Activated CD4-positive, alpha-beta memory T cell treated with anti-CD3 and anti-CD28 coated beads, Interleukin-2, amount 10 ng/mL, durations not matched to agents 7 days and 5 days (primary cell): ENCODE measurements at regions of chr10 and their contacts with region 1.

Region 1: DNA sequence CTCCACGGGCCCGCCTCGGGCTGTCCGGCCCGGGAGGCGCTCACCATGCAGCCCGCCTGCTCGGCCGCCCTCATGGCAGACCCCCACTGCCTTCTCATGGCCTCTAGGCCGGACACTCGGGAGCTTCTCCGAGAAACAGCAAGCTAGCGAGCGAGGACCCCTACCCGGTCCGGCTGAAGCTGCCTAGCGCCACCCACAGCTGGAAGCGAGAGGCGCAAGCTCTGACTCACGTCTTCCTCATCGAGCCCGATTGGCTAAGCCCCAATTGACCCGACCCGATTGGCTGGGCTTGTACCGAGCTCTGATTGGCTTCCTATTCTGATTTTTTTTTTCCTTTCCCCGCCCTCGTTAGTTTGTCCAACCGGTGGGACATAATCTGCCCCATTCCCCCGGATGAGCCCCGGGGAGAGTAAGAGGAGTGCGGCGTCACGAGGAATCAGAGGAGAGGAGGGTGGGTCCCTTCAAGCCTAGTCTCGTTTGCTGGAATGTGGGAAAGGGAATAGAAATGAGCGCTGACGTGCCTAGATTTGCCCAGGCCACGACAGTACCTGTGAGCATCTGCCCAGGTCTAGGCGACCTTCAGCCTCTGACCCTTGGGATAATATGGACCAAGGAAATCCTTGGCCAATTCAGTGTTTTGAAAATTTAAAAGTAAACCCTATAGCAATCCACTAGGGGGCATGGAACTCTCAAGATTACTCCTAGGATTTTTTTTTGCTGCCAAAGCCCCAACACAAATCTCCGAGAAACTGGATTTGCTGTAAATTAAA is at the start of gene TYSND1:
- DNase-seq: peak; percentile 94
- H3K4me3 Mint-ChIP-seq: peak within 1 kb of the TSS; percentile 82
- H3K27ac Mint-ChIP-seq: peak within 1 kb of the TSS; percentile 84
- H3K4me1 Mint-ChIP-seq: peaks cover 19% of the 10 kb centered on the region
- H3K27me3 Mint-ChIP-seq: no peaks in the 10 kb centered on the region
- total RNA-seq, gene TYSND1: 9.3 to 9.8 TPM

Region 2: DNA sequence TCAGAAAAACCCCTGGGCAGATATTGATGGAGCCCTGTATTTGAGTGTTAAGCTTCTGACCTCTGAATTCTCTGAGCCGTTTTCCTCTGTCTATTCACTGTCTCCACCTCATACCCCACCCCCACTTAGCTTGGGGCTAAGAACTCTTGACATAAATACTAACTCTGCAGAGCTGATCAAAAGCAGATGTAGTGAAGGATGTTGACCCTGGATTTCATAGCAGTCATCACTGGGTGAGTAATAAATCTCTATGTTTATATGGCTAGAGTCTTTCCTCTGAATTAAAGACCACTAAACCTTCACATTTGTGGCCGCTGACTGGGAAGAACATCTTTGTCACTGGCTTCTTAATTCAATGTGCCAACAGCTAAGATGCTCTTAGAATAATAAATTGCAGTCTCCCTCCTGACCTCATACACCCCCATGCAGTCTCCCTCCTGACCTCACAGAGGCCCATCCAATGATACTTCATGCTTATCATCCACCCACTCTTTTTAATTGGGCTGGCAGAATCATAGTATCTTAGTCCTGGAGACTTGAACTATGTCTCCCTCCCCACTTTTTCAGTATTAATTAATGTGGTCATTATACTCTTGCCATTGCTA is 172.0 kb before region 1 on chr10:
- CTCF ChIA-PET with region 1: no interaction called
- POLR2A ChIA-PET with region 1: no interaction called
- DNase-seq: no peak
- H3K4me3 Mint-ChIP-seq: no peak overlapping the region
- H3K27ac Mint-ChIP-seq: no peak overlapping the region
- H3K4me1 Mint-ChIP-seq: peaks cover 6% of the 10 kb centered on the region
- H3K27me3 Mint-ChIP-seq: peaks cover 48% of the 10 kb centered on the region

Region 3: DNA sequence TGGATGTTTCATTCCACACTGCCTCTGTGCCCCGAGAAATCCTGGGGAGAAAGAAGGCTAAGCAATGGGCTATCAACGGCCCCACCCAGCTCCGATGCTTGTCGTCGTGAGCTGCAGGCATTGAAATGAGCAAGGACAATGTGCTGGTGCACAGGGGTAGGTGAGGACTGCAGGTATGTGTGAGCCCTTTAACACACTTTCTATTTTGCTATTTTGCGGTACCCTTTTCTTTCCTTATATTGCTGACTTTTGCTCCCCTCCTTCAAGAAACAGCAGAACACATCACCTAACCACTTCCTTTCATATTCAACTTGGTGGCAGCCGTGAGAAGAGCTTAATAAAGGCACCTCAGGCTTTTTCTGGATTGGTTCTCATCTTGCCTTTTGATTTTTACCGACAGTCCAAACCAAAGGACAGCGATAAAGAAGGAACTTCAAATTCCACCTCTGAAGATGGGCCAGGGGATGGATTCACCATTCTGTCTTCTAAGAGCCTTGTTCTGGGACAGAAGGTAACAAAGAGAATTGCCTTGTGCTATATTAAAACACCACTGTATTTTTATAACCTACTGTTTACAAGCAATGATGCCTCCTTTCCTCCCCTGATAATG is 53.2 kb before region 1 on chr10:
- CTCF ChIA-PET with region 1: interaction called, 49 read pairs
- POLR2A ChIA-PET with region 1: interaction called, 49 read pairs
- DNase-seq: peak; percentile 42
- H3K4me3 Mint-ChIP-seq: peak overlapping the region; percentile 63
- H3K27ac Mint-ChIP-seq: peak overlapping the region; percentile 81
- H3K4me1 Mint-ChIP-seq: peaks cover 31% of the 10 kb centered on the region
- H3K27me3 Mint-ChIP-seq: no peaks in the 10 kb centered on the region

Region 4: GRCh38 chr10:70132098-70133029 is 14.3 kb before region 1 on chr10 and contains the start of gene AIFM2:
- CTCF ChIA-PET with region 1: interaction called, 35 read pairs
- POLR2A ChIA-PET with region 1: interaction called, 25 read pairs
- DNase-seq: peak; percentile 37
- H3K4me3 Mint-ChIP-seq: peak within 1 kb of the TSS; percentile 80
- H3K27ac Mint-ChIP-seq: peak within 1 kb of the TSS; percentile 62
- H3K4me1 Mint-ChIP-seq: peaks cover 25% of the 10 kb centered on the region
- H3K27me3 Mint-ChIP-seq: no peaks in the 10 kb centered on the region
- total RNA-seq, gene AIFM2: 3.7 to 3.8 TPM

Region 5: DNA sequence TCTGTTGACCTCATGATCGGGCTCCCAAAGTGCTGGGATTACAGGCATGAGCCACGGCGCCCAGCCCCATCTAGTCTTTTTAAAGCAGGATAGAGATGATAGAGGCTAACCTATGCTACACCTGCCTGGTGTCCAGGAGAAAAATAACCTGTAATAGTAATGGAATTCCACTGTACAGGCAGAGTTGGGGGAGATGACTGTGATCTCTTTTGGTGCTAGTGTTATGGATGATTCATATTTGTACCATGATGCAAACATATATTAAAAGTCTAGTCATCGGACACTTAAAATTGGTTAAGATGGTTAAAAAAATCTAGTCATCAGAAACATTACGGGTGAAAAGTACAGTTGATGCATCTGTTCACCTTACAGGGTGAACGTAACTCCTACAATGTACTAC is 29.8 kb after region 1 on chr10:
- CTCF ChIA-PET with region 1: interaction called, 77 read pairs
- POLR2A ChIA-PET with region 1: interaction called, 96 read pairs
- DNase-seq: no peak
- H3K4me3 Mint-ChIP-seq: no peak overlapping the region
- H3K27ac Mint-ChIP-seq: no peak overlapping the region
- H3K4me1 Mint-ChIP-seq: peaks cover 29% of the 10 kb centered on the region
- H3K27me3 Mint-ChIP-seq: peaks cover 14% of the 10 kb centered on the region

Region 6: DNA sequence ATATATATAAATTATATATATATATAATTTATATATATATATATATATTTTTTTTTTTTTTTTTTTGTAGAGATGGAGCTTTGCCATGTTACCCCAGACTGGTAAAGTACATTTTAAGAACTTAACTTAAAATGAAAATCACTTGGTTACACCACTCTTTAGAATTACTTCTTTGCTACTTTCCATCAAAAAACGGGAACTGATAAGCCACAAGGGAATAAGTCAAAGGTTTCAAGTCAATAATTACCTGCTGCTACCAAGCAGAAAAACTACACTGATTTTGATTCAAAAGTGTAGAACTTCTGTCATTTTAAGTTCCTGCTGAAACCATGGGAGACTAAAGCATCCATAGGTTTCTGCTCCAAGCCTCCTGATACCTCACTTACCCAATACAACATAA is 74.4 kb after region 1 on chr10:
- CTCF ChIA-PET with region 1: interaction called, 38 read pairs
- POLR2A ChIA-PET with region 1: interaction called, 5 read pairs
- DNase-seq: no peak
- H3K4me3 Mint-ChIP-seq: peak overlapping the region; percentile 53
- H3K27ac Mint-ChIP-seq: peak overlapping the region; percentile 73
- H3K4me1 Mint-ChIP-seq: peaks cover 37% of the 10 kb centered on the region
- H3K27me3 Mint-ChIP-seq: no peaks in the 10 kb centered on the region

Region 7: GRCh38 chr10:70363971-70364771 is 217.5 kb after region 1 on chr10:
- CTCF ChIA-PET with region 1: interaction called, 40 read pairs
- POLR2A ChIA-PET with region 1: interaction called, 4 read pairs
- DNase-seq: peak; percentile 88
- H3K4me3 Mint-ChIP-seq: no peak overlapping the region
- H3K27ac Mint-ChIP-seq: no peak overlapping the region
- H3K4me1 Mint-ChIP-seq: peaks cover 11% of the 10 kb centered on the region
- H3K27me3 Mint-ChIP-seq: no peaks in the 10 kb centered on the region